ENCODE measurements at regions of chr10 and their contacts with region 1.

Region 1: GRCh38 chr10:74249865-74250264 is 98.8 kb downstream of the ADK start:
- DNase-seq: no peak
- H3K4me3 ChIP-seq: no peak overlapping the region
- H3K27ac ChIP-seq: no peak overlapping the region
- H3K4me1 ChIP-seq: no peaks in the 10 kb centered on the region
- H3K27me3 ChIP-seq: no peaks in the 10 kb centered on the region
- CTCF ChIP-seq: no peak
- EP300 ChIP-seq: no peak
- POLR2A ChIP-seq: no peak

Region 2: DNA sequence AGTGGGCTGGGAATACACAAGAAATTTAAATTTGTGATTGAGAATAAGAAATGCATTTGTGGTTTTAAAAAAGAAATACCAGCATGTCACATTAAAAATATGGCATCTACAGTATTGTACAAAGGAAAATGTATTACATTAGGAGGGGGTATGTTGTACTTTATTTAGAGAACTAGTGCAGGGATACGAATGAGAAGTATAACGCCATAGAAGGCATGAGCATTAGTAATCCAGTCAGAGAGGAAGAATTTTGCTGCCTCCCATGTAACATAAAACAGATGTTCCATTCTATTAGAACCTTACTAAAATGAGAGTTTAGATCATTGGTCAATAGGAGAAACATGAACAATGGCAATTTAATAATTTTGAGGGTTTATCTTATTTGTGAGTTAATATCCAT is 83.3 kb after region 1 on chr10:
- intact Hi-C with region 1: no loop called
- DNase-seq: no peak
- H3K4me3 ChIP-seq: no peak overlapping the region
- H3K27ac ChIP-seq: no peak overlapping the region
- H3K4me1 ChIP-seq: no peaks in the 10 kb centered on the region
- H3K27me3 ChIP-seq: no peaks in the 10 kb centered on the region
- CTCF ChIP-seq: no peak
- EP300 ChIP-seq: no peak
- POLR2A ChIP-seq: no peak

Region 3: DNA sequence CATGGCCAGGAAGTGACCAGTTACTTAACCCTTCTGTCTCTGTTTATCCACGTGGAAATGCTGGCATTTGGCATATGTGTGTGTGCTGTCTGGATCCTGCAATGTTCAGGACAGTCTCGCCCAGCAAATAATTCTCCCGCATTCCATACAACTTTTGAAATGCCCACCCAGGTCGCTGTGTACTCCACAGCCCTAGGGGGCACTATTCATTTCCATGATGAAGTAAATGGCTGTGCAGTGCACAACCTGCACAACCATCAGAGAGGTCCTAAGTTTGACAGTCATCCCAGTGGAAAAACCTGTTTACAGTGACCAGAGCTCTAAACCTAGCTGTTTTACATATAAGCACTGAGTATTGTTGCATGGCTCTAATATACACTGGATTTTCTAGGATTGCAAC is 1113.6 kb after region 1 on chr10:
- intact Hi-C with region 1: loop called in 1 of 4 experiments (anchors 5 kb)
- DNase-seq: no peak
- H3K4me3 ChIP-seq: no peak overlapping the region
- H3K27ac ChIP-seq: no peak overlapping the region
- H3K4me1 ChIP-seq: no peaks in the 10 kb centered on the region
- H3K27me3 ChIP-seq: no peaks in the 10 kb centered on the region
- CTCF ChIP-seq: no peak
- EP300 ChIP-seq: no peak
- POLR2A ChIP-seq: no peak